ENCODE measurements at regions of chr15 and their contacts with region 1.

Region 1: DNA sequence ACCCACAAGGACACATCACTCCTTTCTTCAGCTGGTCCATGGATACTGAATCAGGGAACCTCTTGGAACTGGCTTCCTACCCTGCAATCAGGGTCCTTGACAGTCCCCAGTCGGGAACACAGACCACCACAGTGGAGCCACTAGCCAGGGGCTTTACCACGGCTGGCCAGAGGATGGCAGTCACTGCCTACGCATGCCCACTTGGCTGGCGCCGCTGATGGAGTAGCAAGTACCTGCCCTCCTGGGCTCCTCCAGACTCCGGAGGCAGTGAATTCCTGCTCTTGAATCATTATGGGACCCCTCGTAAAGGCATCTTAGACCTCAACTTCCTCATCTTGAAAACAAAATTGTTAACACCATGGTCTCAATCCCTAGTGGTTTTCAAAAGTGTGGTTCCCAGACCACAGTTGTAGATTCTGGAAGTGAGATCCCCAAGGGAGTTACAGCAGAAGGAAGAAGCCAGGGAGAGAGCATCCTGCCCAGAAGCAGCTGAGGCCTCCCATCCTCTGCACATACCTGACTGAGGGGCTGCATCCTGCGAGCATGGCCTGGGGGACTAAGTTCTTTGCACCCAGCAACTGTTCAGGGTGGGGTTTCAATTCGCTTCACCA is 9.1 kb upstream of the SKIC8 start:
- DNase-seq: peak; percentile 14 to 43
- ATAC-seq: peak in 1 of 2 donors; percentile 72
- H3K4me3 ChIP-seq: no peak overlapping the region
- H3K27ac ChIP-seq: no peak overlapping the region
- H3K4me1 ChIP-seq: peaks cover 5 to 8% of the 10 kb centered on the region in 2 donors
- H3K27me3 ChIP-seq: no peaks in the 10 kb centered on the region
- CTCF ChIP-seq: peak; percentile 56 to 79 (median 69)
- POLR2A ChIP-seq: no peak

Region 2: GRCh38 chr15:78276064-78276943 is 32.2 kb before region 1 on chr15:
- in situ Hi-C with region 1: no loop called
- intact Hi-C with region 1: no loop called
- DNase-seq: no peak
- ATAC-seq: no peak
- H3K4me3 ChIP-seq: no peak overlapping the region
- H3K27ac ChIP-seq: peak overlapping the region; percentile 13 to 68 (median 49)
- H3K4me1 ChIP-seq: no peaks in the 10 kb centered on the region
- H3K27me3 ChIP-seq: no peaks in the 10 kb centered on the region
- CTCF ChIP-seq: no peak
- POLR2A ChIP-seq: no peak

Region 3: GRCh38 chr15:78422571-78423340 is 114.2 kb after region 1 on chr15:
- in situ Hi-C with region 1: loop called in 3 of 4 experiments (anchors 5 to 10 kb)
- intact Hi-C with region 1: loop called (anchors 1 kb)
- DNase-seq: peak; percentile 11 to 32
- ATAC-seq: peak; percentile 57 to 78
- H3K4me3 ChIP-seq: no peak overlapping the region
- H3K27ac ChIP-seq: no peak overlapping the region
- H3K4me1 ChIP-seq: no peaks in the 10 kb centered on the region
- H3K27me3 ChIP-seq: no peaks in the 10 kb centered on the region
- CTCF ChIP-seq: peak; percentile 65 to 93 (median 79)
- POLR2A ChIP-seq: no peak

Region 4: DNA sequence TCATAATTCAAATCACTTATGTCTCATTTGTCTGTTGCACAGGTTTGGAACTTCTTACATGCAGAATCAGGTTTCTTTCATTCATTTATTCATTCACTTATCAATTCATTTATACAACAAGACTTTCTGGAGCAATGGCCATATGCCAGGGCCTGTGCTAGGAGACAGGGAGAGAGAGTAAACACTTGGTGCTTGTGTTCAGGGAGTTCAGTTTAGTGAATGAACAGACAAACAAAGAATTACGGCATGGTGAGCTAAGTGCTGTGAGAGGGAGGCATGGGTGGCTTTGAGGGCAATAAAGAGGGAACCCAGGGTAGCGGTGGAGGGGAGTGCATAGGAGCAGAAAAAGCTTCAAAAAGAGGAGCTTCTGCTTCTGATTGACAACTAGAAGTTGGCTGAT is 121.0 kb after region 1 on chr15:
- in situ Hi-C with region 1: loop called (anchors 5 to 10 kb)
- intact Hi-C with region 1: no loop called
- DNase-seq: no peak
- ATAC-seq: no peak
- H3K4me3 ChIP-seq: no peak overlapping the region
- H3K27ac ChIP-seq: no peak overlapping the region
- H3K4me1 ChIP-seq: no peaks in the 10 kb centered on the region
- H3K27me3 ChIP-seq: no peaks in the 10 kb centered on the region
- CTCF ChIP-seq: no peak
- POLR2A ChIP-seq: no peak

Region 5: DNA sequence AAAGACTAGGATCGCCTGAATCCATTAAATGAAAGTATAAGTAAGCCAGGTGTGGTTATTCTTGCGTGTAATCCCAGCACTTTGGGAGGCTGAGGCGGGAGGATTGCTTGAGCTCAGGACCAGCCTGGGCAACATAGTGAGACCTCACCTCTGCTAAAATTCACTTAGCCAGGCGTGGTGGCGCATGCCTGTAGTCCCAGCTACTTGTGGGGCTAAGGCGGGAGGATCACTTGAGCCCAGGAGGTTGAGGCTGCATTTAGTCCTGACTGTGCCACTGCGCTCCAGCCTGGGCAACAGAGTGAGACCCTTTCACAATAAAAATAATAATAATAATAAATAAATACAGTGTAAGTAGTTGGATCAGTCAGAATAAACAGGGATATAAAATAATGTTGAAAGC is 173.4 kb after region 1 on chr15:
- in situ Hi-C with region 1: no loop called
- intact Hi-C with region 1: loop called (anchors 5 kb)
- DNase-seq: no peak
- ATAC-seq: no peak
- H3K4me3 ChIP-seq: no peak overlapping the region
- H3K27ac ChIP-seq: no peak overlapping the region
- H3K4me1 ChIP-seq: no peaks in the 10 kb centered on the region
- H3K27me3 ChIP-seq: no peaks in the 10 kb centered on the region
- CTCF ChIP-seq: no peak
- POLR2A ChIP-seq: no peak

Measured in gastrocnemius medialis (tissue), 4 donors.